ENCODE measurements at regions of chr2 and their contacts with region 1.

Region 1: GRCh38 chr2:190880378-190881073 is at the start of gene GLS:
- H3K4me3 Mint-ChIP-seq: peak within 1 kb of the TSS; percentile 97
- H3K27ac Mint-ChIP-seq: peak within 1 kb of the TSS; percentile 96
- H3K4me1 Mint-ChIP-seq: peaks cover 33% of the 10 kb centered on the region
- H3K27me3 Mint-ChIP-seq: no peaks in the 10 kb centered on the region

Region 2: DNA sequence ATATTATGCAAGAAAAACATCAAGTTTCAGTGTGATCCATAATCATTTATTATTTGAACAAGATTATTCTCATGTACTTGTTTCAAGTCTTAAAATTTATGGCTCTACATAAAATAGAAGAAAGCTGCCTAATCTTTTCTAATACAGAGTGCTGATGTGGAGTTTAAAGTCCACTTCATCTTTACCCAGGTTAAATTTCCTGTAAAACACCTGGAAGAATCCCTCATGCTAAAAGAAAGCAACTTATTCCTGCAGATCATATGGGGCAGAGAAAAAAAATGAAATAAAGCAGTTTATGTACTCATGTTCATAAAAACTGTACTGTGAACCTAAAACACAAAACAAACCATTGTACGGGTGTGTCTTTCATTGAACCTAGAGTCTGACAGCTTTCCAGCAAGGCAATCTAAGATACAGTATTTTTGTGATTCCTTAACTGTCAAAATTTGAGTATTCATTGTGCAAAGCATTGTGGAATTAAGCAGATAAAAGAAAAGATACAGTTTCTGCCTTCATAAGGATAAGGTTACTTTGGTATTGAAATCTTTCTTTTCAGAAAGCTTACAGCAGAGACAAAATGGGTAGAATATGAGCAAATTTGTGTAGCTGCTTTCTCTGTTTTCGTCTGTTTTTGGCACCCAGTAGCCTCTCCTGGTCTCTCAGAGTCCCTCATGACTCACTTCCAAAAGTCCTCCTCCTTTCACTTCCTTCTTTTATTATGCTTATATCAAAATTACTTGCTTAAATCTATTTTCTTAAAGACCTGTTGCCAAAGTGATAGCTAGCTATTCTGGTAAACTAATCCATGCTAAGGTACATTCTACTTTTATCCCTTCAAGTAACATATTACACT is 26.8 kb before region 1 on chr2:
- intact Hi-C with region 1: loop called (anchors 2 kb)
- H3K4me3 Mint-ChIP-seq: no peak overlapping the region
- H3K27ac Mint-ChIP-seq: peak overlapping the region; percentile 43
- H3K4me1 Mint-ChIP-seq: peaks cover 23% of the 10 kb centered on the region
- H3K27me3 Mint-ChIP-seq: no peaks in the 10 kb centered on the region

Measured in dendritic cell treated with granulocyte-macrophage colony-stimulating factor and Interleukin-4, amounts not matched to agents 40 ng/mL and 50 ng/mL, for 4 days (primary cell).